T-cell (primary cell): ENCODE measurements at regions of chr9 and their contacts with region 1.

Region 1: DNA sequence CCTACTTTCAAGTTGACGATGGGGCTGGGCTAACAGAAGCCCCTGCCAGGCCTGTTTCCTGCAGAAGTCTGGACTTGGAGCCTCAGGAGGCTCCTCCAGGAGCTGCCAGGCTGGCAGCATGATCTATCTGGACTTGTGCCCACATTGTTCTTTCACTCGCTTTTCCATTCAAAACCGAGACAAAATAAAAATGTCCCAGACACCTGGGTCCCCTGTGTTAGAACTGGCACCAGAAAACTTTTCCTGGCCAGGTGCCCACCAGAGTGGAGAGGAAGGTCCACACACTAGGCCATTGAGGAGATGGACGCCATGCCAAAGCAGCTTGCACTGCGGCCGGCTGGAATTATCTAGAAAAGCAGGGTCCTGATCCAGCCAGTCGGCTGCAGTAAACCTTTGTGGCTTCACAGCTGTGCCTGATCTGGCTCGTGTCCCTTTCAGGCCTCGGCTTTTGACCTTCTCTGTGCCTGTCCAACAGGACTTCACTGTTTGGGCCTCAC is 78.2 kb downstream of the GCNT1 start:
- DNase-seq: peak in 1 of 35 experiments; percentile 1
- ATAC-seq: no peak
- H3K4me3 ChIP-seq: no peak overlapping the region
- H3K4me3 Mint-ChIP-seq: no peak overlapping the region
- H3K27ac ChIP-seq: no peak overlapping the region
- H3K27ac Mint-ChIP-seq: no peak overlapping the region
- H3K4me1 ChIP-seq: no peaks in the 10 kb centered on the region
- H3K4me1 Mint-ChIP-seq: peaks cover 0 to 2% (median 0%) of the 10 kb centered on the region in 3 donors
- H3K27me3 ChIP-seq: no peaks in the 10 kb centered on the region
- H3K27me3 Mint-ChIP-seq: peaks cover 0 to 3% of the 10 kb centered on the region in 2 donors

Region 2: DNA sequence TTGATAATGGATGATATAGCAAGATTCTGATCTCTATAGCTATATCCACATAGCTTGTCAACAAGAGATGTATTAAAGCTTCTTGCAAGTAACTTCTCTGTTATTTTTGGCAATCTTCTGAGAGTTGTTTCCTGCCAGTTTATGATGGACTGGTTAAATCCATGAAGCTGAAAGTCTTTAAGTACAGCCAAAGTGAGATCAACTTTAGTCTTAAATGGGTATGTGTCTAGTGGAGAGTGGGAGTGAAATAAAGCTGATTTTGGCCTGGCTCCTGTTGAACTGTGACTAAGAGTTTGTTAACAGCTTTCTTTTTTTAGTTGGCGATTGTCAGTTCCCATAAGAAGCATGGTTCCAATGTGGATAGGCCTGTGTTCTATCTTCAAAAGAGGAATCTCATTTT is 997.7 kb before region 1 on chr9:
- CTCF ChIA-PET with region 1: no interaction called
- POLR2A ChIA-PET with region 1: no interaction called
- DNase-seq: no peak
- ATAC-seq: no peak
- H3K4me3 ChIP-seq: no peak overlapping the region
- H3K4me3 Mint-ChIP-seq: no peak overlapping the region
- H3K27ac ChIP-seq: no peak overlapping the region
- H3K27ac Mint-ChIP-seq: no peak overlapping the region
- H3K4me1 ChIP-seq: no peaks in the 10 kb centered on the region
- H3K4me1 Mint-ChIP-seq: no peaks in the 10 kb centered on the region
- H3K27me3 ChIP-seq: no peaks in the 10 kb centered on the region
- H3K27me3 Mint-ChIP-seq: peaks cover 0 to 9% of the 10 kb centered on the region in 2 donors

Region 3: GRCh38 chr9:76369583-76369982 is 167.6 kb before region 1 on chr9:
- CTCF ChIA-PET with region 1: no interaction called
- POLR2A ChIA-PET with region 1: no interaction called
- DNase-seq: no peak
- ATAC-seq: no peak
- H3K4me3 ChIP-seq: no peak overlapping the region
- H3K4me3 Mint-ChIP-seq: no peak overlapping the region
- H3K27ac ChIP-seq: no peak overlapping the region
- H3K27ac Mint-ChIP-seq: no peak overlapping the region
- H3K4me1 ChIP-seq: no peaks in the 10 kb centered on the region
- H3K4me1 Mint-ChIP-seq: no peaks in the 10 kb centered on the region
- H3K27me3 ChIP-seq: peaks cover 0 to 4% of the 10 kb centered on the region in 2 experiments
- H3K27me3 Mint-ChIP-seq: peaks cover 0 to under 1% of the 10 kb centered on the region in 2 donors

Region 4: DNA sequence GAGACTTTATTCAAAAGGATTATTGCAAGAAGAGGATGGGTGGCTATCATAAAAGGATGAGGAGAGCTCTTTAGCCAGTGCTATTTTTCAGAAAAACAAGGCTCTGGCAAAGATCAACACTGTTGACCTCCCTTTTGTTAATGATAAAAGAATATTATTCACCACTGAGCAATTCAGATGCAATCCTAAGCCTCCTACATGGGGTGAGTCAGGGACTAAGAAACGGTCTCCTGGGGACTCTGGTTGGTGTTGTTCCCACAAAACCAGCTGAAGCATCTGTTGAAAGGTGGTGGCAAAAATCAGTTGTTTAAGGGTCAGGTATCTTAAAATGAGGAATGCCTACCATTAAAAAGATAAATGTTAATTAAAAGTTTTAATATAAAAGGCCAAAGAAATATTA is 86.0 kb before region 1 on chr9:
- CTCF ChIA-PET with region 1: interaction called in 1 of 2 experiments, 10 read pairs
- POLR2A ChIA-PET with region 1: no interaction called
- DNase-seq: no peak
- ATAC-seq: no peak
- H3K4me3 ChIP-seq: no peak overlapping the region
- H3K4me3 Mint-ChIP-seq: no peak overlapping the region
- H3K27ac ChIP-seq: no peak overlapping the region
- H3K27ac Mint-ChIP-seq: no peak overlapping the region
- H3K4me1 ChIP-seq: peaks cover 0 to 4% of the 10 kb centered on the region in 2 experiments
- H3K4me1 Mint-ChIP-seq: peaks cover 4% of the 10 kb centered on the region in 3 donors
- H3K27me3 ChIP-seq: no peaks in the 10 kb centered on the region
- H3K27me3 Mint-ChIP-seq: no peaks in the 10 kb centered on the region